ENCODE measurements at regions of chr11 and their contacts with region 1.

Region 1: GRCh38 chr11:47867821-47868220 is 19.7 kb upstream of the NUP160 start:
- DNase-seq: no peak
- ATAC-seq: no peak
- H3K4me3 ChIP-seq: no peak overlapping the region
- H3K27ac ChIP-seq: no peak overlapping the region
- H3K4me1 ChIP-seq: peaks cover 14% of the 10 kb centered on the region
- H3K27me3 ChIP-seq: no peaks in the 10 kb centered on the region
- CTCF ChIP-seq: no peak

Region 2: GRCh38 chr11:47837292-47837691 is 30.5 kb before region 1 on chr11:
- CTCF ChIA-PET with region 1: no interaction called
- POLR2A ChIA-PET with region 1: no interaction called
- in situ Hi-C with region 1: no loop called
- intact Hi-C with region 1: no loop called
- DNase-seq: no peak
- ATAC-seq: no peak
- H3K4me3 ChIP-seq: no peak overlapping the region
- H3K27ac ChIP-seq: no peak overlapping the region
- H3K4me1 ChIP-seq: no peaks in the 10 kb centered on the region
- H3K27me3 ChIP-seq: no peaks in the 10 kb centered on the region
- CTCF ChIP-seq: no peak

Region 3: GRCh38 chr11:47899801-47900200 is 32.0 kb after region 1 on chr11:
- CTCF ChIA-PET with region 1: no interaction called
- POLR2A ChIA-PET with region 1: interaction called, 10 read pairs
- in situ Hi-C with region 1: no loop called
- intact Hi-C with region 1: no loop called
- DNase-seq: no peak
- ATAC-seq: peak; percentile 34; the same call in 1 of the 2 replicates
- H3K4me3 ChIP-seq: no peak overlapping the region
- H3K27ac ChIP-seq: no peak overlapping the region
- H3K4me1 ChIP-seq: no peaks in the 10 kb centered on the region
- H3K27me3 ChIP-seq: no peaks in the 10 kb centered on the region
- CTCF ChIP-seq: no peak

Region 4: DNA sequence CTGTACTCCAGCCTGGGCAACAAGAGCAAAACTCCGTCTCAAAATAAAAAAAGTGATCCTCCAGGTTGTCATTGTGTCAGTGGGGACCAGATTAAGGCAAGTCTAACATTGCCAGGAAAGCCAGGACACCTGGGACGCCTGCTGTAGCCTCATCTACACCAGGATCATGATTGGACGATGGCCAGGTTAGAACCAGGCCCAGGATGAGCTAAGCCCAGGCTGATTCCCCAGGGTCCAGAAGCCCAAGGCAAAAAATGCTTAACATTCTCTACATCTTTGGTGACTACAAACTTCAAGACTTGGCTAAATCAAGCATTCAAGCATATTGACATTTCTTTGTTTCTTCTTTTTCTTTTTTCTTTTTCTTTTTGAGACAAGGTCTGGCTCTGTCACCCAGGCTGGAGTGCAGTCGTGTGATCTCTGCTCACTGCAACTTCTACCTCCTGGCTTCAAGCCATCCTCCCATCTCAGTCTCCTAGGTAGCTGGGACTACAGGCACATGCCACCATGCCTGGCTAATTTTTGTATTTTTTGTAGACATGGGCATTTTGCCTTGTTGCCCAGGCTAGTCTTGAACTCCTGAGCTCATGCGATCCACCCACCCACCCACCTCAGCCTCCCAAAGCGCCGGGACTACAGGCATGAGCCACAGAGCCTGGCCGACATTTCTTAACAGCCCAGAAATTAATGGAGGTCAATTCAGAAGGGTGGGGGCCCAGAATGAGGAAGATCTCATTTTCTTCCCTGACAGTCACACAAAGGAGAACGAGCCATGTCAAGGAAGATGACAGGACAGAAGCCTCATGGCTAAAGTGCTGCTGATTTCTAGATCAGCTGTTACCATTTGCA is 100.0 kb after region 1 on chr11:
- CTCF ChIA-PET with region 1: no interaction called
- POLR2A ChIA-PET with region 1: no interaction called
- in situ Hi-C with region 1: no loop called
- intact Hi-C with region 1: no loop called
- DNase-seq: no peak
- ATAC-seq: no peak
- H3K4me3 ChIP-seq: no peak overlapping the region
- H3K27ac ChIP-seq: no peak overlapping the region
- H3K4me1 ChIP-seq: peaks cover 5% of the 10 kb centered on the region; the same call in 1 of the 2 replicates
- H3K27me3 ChIP-seq: no peaks in the 10 kb centered on the region
- CTCF ChIP-seq: no peak

Measured in Panc1 (cell line).